ENCODE measurements at regions of chr9 and their contacts with region 1.

Region 1: DNA sequence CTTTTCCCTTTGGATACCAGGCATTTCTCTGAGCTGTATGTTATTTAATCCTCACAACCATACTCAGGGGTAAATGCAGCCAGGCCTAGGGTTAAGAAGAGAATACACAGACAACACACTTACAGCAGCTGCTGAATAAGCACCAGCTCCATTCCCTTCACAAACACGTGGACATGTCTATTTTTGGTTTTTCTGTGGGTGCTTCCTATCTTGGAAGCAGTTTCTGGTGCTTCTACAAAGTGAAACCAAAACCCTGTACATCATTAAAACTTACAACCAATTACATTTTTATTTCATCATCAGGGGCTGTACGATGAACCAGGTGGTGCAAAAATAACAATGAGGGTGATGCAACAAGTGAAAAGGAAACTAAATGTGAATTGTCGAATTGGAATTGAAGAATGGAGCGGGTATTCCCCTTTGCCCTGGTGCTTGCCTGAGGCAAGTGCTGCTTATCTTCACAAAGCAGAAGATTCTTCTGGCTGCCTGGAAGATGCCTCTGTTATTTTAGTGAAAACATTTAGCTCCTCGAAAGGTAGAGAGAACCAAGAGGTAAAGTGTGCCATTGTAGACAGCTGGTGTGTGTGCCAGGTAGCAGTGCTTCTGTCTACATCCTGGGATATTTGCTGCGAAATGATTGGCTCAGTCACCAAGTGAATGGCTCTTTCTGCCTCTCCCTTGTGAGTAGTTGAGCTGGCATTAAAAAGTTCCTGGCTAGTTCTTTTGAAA is 18.6 kb upstream of the IFNB1 start:
- DNase-seq: peak; percentile 59 to 83 (median 78)
- H3K4me3 ChIP-seq: peak overlapping the region in 2 of 3 experiments; percentile 13 to 56
- H3K4me3 Mint-ChIP-seq: peak overlapping the region; percentile 34 to 62
- H3K27ac ChIP-seq: peak overlapping the region; percentile 26 to 49
- H3K27ac Mint-ChIP-seq: peak overlapping the region; percentile 56 to 86 (median 76)
- H3K4me1 ChIP-seq: peaks cover 25 to 32% of the 10 kb centered on the region in 2 donors
- H3K4me1 Mint-ChIP-seq: peaks cover 34% of the 10 kb centered on the region
- H3K27me3 ChIP-seq: no peaks in the 10 kb centered on the region
- H3K27me3 Mint-ChIP-seq: no peaks in the 10 kb centered on the region
- CTCF ChIP-seq: no peak

Region 2: GRCh38 chr9:20972684-20973083 is 123.7 kb before region 1 on chr9:
- intact Hi-C with region 1: loop called in 1 of 2 experiments (anchors 5 kb)
- DNase-seq: no peak
- H3K4me3 ChIP-seq: peak overlapping the region in 1 of 3 experiments; percentile 23
- H3K4me3 Mint-ChIP-seq: no peak overlapping the region
- H3K27ac ChIP-seq: peak overlapping the region in 1 of 2 donors; percentile 76
- H3K27ac Mint-ChIP-seq: no peak overlapping the region
- H3K4me1 ChIP-seq: no peaks in the 10 kb centered on the region
- H3K4me1 Mint-ChIP-seq: no peaks in the 10 kb centered on the region
- H3K27me3 ChIP-seq: no peaks in the 10 kb centered on the region
- H3K27me3 Mint-ChIP-seq: no peaks in the 10 kb centered on the region
- CTCF ChIP-seq: no peak

Region 3: GRCh38 chr9:21395778-21396717 is 299.7 kb after region 1 on chr9:
- intact Hi-C with region 1: no loop called
- DNase-seq: peak in 2 of 3 donors; percentile 31 to 46
- H3K4me3 ChIP-seq: peak overlapping the region; percentile 37 to 78 (median 38)
- H3K4me3 Mint-ChIP-seq: peak overlapping the region; percentile 76 to 98
- H3K27ac ChIP-seq: no peak overlapping the region
- H3K27ac Mint-ChIP-seq: peak overlapping the region in 1 of 7 donors; percentile 1
- H3K4me1 ChIP-seq: peaks cover 8 to 10% of the 10 kb centered on the region in 2 donors
- H3K4me1 Mint-ChIP-seq: peaks cover 10% of the 10 kb centered on the region
- H3K27me3 ChIP-seq: peaks cover 77 to 91% of the 10 kb centered on the region in 2 donors
- H3K27me3 Mint-ChIP-seq: peaks cover 66 to 87% (median 78%) of the 10 kb centered on the region in 3 donors
- CTCF ChIP-seq: peak; percentile 85

Measured in CD14-positive monocyte (primary cell).